K562 (cell line): ENCODE measurements at regions of chr5 and their contacts with region 1.

Region 1: GRCh38 chr5:150458819-150459557 is 9.4 kb upstream of the RPS14 start:
- DNase-seq: peak; percentile 88 to 95 (median 92)
- ATAC-seq: peak; percentile 94
- H3K4me3 ChIP-seq: no peak overlapping the region
- H3K27ac ChIP-seq: no peak overlapping the region
- H3K4me1 ChIP-seq: peaks cover 23 to 39% of the 10 kb centered on the region in 2 experiments; a peak in 4 of 5 replicates
- H3K27me3 ChIP-seq: no peaks in the 10 kb centered on the region
- CTCF ChIP-seq: peak; percentile 68 to 92 (median 85)
- EP300 ChIP-seq: no peak
- POLR2A ChIP-seq: no peak
- RAD21 ChIP-seq: peak; percentile 67 to 80

Region 2: GRCh38 chr5:150498501-150498900 is 39.5 kb after region 1 on chr5:
- CTCF ChIA-PET with region 1: no interaction called
- POLR2A ChIA-PET with region 1: no interaction called
- in situ Hi-C with region 1: no loop called
- intact Hi-C with region 1: loop called (anchors 1 kb)
- DNase-seq: no peak
- ATAC-seq: no peak; the same call in 2 of the 3 replicates
- H3K4me3 ChIP-seq: no peak overlapping the region
- H3K27ac ChIP-seq: no peak overlapping the region
- H3K4me1 ChIP-seq: peaks cover 33 to 54% of the 10 kb centered on the region in 2 experiments
- H3K27me3 ChIP-seq: no peaks in the 10 kb centered on the region
- CTCF ChIP-seq: no peak
- EP300 ChIP-seq: no peak
- POLR2A ChIP-seq: no peak
- RAD21 ChIP-seq: no peak

Region 3: DNA sequence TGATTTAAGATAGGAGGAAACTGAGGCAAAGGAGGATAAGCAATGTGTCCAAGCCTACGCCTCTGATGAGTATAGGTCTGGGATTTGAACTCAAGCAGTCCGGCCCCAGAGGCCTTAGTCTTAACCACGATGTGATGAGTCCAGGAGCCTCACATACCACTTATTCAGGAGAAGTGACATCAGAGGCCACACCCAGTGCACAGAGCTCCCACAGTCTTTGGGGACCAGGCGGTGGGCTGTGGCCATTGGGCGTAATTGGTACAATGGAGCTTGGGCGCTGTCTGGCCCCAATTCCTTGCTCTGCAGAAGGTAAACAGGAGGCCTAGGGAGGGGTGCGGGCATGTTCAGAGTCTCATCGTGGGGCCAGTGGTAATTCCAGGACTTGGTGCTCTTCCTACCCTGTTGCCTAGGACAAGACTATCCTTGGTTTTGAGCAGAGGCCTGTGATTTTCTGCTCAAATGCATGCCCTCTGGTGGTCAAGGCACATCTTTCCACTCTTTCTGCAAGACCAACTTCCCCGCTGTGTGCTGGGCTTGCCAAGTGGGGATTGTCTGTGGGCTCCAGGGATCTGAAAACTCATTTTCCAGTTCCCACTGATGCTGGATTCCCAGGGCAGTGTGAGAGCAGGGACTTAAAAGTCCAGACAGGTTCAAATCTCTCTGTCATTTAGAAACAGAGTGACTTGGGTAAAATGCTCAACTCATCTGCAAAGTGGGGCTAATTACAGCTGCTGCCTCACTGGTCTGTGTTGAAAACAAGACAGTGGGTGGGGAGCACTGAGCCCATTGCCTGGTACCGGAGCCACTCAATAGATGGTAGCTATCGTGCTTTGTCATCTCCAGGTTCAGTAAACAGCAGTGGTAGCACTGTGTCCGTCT is 64.7 kb after region 1 on chr5:
- CTCF ChIA-PET with region 1: interaction called, 25 read pairs
- POLR2A ChIA-PET with region 1: no interaction called
- in situ Hi-C with region 1: no loop called
- intact Hi-C with region 1: loop called (anchors 1 kb)
- DNase-seq: peak; percentile 51 to 64 (median 57)
- ATAC-seq: peak; percentile 95
- H3K4me3 ChIP-seq: no peak overlapping the region
- H3K27ac ChIP-seq: no peak overlapping the region
- H3K4me1 ChIP-seq: peaks cover 3 to 25% of the 10 kb centered on the region in 2 experiments; a peak in 3 of 5 replicates
- H3K27me3 ChIP-seq: no peaks in the 10 kb centered on the region
- CTCF ChIP-seq: peak; percentile 68 to 71 (median 69)
- EP300 ChIP-seq: no peak
- POLR2A ChIP-seq: no peak
- RAD21 ChIP-seq: peak; percentile 62 to 79

Region 4: DNA sequence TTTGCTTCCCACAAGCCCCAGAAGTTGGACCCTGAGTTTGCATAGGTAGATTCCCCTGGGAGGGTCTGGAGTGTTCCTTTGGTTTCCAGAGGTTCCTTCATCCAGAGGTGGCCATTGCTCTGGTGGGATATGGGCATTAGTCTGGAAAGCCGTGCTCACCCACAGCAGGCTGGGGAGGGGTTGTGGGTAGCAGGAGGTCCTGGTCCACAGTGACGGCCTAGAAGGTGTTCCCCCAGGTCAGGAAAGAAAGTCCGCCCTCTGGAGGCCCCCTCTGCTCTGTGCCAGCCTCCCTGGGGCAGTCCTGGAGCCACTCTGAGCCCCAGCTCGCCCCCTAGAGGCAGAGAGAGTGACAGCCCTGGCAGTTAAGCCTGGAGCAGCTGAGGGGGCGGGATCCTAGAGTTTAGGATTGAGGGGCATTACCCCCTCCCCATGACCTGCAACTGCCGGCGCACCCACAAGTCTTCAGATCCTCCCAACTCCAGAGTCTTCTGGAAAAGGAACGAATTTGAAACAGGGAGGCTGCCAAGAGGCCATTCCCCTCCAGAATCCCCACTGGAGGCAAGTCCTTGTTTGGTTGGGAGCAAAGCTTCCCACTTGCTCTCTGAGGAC is 85.7 kb after region 1 on chr5:
- CTCF ChIA-PET with region 1: interaction called, 44 read pairs
- POLR2A ChIA-PET with region 1: no interaction called
- in situ Hi-C with region 1: loop called (anchors 5 kb)
- intact Hi-C with region 1: loop called (anchors 1 kb)
- DNase-seq: peak; percentile 87 to 95 (median 92)
- ATAC-seq: peak; percentile 100
- H3K4me3 ChIP-seq: no peak overlapping the region
- H3K27ac ChIP-seq: no peak overlapping the region
- H3K4me1 ChIP-seq: peaks cover 0 to 4% of the 10 kb centered on the region in 2 experiments; a peak in 2 of 5 replicates
- H3K27me3 ChIP-seq: no peaks in the 10 kb centered on the region
- CTCF ChIP-seq: peak; percentile 97 to 99 (median 99)
- EP300 ChIP-seq: no peak
- POLR2A ChIP-seq: no peak
- RAD21 ChIP-seq: peak; percentile 75 to 88

Region 5: DNA sequence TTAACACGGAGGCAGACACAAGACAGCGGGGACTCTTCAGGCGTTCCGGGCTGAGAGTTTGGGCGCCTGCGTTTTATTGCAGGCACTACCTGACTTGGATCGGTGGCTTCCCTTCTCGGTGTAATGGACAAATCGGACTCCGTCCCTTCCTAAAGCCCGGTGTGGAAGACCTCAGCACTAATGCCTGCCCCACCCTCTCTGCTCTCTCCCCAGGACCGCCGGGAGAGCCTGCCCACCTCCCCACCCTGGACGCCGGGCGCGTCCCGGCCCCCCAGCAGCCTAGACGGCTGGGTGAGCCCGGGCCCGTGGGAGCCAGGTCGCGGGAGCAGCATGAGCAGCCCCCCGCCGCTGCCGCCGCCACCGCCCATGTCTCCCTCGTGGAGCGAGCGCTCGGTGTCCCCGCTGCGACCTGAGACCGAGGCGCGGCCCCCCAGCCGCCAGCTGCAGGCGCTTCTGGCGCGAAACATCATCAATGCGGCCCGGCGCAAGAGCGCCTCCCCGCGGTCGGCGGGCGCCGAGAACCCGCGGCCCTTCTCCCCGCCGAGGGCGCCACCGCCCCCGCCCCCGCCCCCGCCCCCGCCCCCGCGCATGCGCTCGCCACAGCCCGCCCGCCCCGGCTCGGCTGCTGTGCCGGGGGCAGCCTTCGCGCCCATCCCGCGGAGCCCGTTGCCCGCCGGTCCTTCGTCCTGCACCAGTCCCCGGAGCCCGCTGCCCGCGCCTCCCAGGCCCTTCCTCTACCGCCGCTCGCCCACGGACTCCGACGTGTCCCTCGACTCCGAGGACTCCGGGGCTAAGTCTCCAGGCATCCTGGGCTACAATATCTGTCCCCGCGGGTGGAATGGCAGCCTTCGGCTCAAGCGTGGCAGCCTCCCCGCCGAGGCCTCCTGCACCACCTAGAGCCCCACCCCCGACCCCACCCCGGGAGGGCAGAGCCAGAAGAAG is 197.5 kb after region 1 on chr5:
- CTCF ChIA-PET with region 1: no interaction called
- POLR2A ChIA-PET with region 1: interaction called, 5 read pairs
- in situ Hi-C with region 1: loop called (anchors 10 kb)
- intact Hi-C with region 1: loop called (anchors 1 kb)
- DNase-seq: peak; percentile 88 to 99 (median 98)
- ATAC-seq: peak; percentile 91
- H3K4me3 ChIP-seq: peak overlapping the region; percentile 64
- H3K27ac ChIP-seq: 0 out of 3 replicates have a peak overlapping the region, but pooled peaks have one; percentile 19
- H3K4me1 ChIP-seq: peaks cover 9 to 13% of the 10 kb centered on the region in 2 experiments; a peak in 4 of 5 replicates
- H3K27me3 ChIP-seq: peaks cover 6 to 50% of the 10 kb centered on the region in 2 experiments
- CTCF ChIP-seq: peak; percentile 44 to 90 (median 77); a peak in 5 of 6 replicates
- EP300 ChIP-seq: no peak
- POLR2A ChIP-seq: peak; percentile 48; the same call in 1 of the 2 replicates
- RAD21 ChIP-seq: peak; percentile 70 to 79